AG04450 (cell line): ENCODE measurements at regions of chr18 and their contacts with region 1.

Region 1: DNA sequence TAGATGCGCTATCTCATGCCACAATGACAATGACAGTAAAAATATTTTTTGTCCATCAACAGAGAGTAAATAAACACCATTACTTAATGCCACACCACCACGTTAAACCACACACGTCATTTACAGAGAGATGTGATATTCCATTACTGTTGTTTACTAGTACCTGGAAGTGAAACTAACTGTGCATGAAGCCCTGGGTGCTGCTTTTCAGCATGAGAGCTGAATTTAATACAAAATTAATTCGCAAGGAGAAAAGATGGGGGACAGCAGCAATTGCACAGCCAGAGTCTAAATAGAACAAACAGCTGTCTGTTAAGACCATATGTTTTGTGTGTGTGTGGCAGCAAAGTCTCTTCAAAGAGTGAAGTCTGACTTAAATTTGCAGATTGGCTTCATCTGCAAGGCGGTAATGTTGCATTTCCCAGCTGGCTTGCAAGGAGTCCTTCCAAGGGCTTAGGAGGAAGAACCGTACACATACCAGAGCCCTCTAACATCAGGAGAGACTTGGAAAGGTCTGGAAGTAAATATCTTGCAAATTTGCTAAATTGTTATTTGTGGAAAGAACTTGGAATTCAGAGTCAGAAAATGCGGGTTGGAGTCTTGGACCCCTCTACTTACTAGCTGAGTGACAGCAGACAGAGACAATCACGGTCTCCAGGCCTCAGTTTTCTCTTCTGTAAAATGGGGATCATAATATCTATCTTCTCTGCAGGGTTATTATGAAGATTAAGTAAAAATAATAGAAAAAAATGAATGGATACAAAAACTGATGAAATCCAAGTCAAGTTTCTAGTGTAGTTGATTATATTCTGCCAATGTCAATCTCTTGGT is 127.6 kb downstream of the ALPK2 start:
- DNase-seq: no peak
- H3K4me3 ChIP-seq: no peak overlapping the region
- H3K27ac ChIP-seq: no peak overlapping the region
- H3K27me3 ChIP-seq: no peaks in the 10 kb centered on the region
- CTCF ChIP-seq: no peak

Region 2: DNA sequence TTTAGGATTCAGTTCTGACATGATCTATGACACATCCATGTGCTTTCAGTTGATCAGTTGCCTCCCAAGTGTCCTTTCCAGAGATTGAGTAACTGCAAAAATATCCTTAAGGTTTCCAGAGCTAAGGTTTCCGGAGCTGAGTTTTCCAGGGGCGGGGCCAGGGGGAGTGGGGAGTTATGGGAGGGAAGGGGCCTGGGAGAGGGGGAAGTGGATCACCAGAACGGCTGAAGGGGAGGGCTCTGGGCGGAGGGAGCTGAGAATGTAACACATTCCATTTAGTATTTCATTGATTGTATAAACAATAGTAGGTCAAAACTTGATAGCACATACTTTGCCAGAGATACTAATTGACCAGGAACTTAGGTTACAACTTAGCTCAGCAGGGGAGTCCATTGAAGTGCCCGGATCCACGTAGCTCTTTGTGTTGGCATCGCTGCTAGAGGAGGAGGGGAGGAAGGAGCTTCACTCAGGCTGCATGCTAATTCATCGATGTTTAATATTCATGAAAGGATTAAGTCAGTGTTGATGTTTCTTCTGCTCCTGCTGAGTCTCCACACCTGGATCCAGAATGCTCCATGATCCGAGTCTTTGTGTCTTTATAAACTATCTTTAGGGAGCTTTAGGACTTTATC is 162.2 kb before region 1 on chr18:
- CTCF ChIA-PET with region 1: no interaction called
- POLR2A ChIA-PET with region 1: interaction called, 10 read pairs
- DNase-seq: no peak
- H3K4me3 ChIP-seq: no peak overlapping the region
- H3K27ac ChIP-seq: no peak overlapping the region
- H3K27me3 ChIP-seq: no peaks in the 10 kb centered on the region
- CTCF ChIP-seq: no peak

Region 3: DNA sequence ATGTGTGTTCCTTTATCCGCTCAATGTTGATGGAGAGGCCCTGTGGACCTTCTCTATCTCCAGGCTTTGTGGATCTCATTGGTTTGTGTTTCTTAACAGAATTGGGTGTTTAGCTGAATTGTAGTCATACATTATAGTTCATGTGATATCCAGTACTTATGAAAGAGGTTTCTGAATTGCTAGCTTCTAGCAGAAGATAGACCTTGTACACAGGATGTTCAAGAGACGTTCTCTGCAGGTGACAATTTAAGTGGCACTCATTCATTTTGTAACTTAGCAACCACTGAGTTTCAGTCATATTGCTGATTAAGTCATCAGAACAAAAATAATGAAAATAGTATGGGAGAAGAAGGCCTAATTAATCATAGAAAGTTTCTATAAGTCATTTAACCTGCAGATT is 151.6 kb before region 1 on chr18:
- CTCF ChIA-PET with region 1: no interaction called
- POLR2A ChIA-PET with region 1: no interaction called
- DNase-seq: no peak
- H3K4me3 ChIP-seq: no peak overlapping the region
- H3K27ac ChIP-seq: no peak overlapping the region
- H3K27me3 ChIP-seq: no peaks in the 10 kb centered on the region
- CTCF ChIP-seq: no peak

Region 4: GRCh38 chr18:58520969-58521368 is 19.7 kb after region 1 on chr18:
- CTCF ChIA-PET with region 1: no interaction called
- POLR2A ChIA-PET with region 1: no interaction called
- DNase-seq: no peak
- H3K4me3 ChIP-seq: no peak overlapping the region
- H3K27ac ChIP-seq: no peak overlapping the region
- H3K27me3 ChIP-seq: no peaks in the 10 kb centered on the region
- CTCF ChIP-seq: no peak

Region 5: DNA sequence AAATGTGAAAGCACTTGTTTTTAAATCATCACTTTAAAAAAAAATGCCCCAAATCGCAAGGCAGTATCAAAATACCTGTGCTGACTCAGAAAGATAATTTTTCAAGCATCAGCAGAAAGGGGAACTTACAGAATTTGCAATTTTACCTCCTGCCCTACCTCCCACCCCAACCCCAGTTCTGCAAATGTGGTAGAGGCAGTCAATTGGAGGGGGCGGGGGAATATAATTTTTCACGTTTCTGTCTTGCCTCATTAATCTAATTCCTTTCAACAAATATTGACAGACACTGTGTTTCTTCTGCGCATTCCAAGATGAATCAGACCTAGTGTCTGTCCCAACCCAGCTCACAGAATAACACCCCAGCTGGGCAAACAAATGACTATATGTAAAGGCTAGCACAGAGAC is 50.8 kb after region 1 on chr18:
- CTCF ChIA-PET with region 1: no interaction called
- POLR2A ChIA-PET with region 1: no interaction called
- DNase-seq: no peak
- H3K4me3 ChIP-seq: no peak overlapping the region
- H3K27ac ChIP-seq: no peak overlapping the region
- H3K27me3 ChIP-seq: no peaks in the 10 kb centered on the region
- CTCF ChIP-seq: no peak

Region 6: DNA sequence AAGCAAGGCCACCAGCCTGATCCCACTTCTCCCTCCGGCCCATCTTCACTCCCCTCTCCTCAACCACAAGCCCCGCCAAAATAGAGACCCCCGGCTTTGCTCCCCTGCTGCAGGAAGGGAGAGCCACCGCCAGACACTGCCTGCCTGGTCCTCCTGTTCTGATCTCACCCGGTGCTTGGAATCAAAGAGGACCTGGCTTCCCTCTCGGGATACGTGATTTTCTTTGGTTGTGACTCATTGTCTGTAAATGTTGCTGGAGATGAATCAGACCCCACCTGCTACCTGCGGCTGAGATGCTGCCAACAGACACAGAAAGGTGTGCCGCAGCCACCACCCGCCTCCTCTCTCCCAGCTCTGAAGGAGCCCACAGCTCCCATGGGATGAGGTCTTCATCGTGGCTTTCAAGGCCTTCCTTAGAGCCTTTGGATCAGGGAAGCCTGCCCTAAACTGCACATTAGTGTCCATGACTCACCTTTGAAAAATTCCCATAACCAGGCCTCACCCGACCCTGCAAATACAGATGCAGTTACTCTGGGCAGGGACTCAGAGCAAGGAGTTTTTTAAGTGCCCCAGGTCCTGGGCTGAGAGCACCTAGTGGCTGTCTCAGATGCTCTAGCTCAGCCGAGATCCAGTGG is 284.0 kb after region 1 on chr18:
- CTCF ChIA-PET with region 1: no interaction called
- POLR2A ChIA-PET with region 1: no interaction called
- DNase-seq: peak; percentile 62
- H3K4me3 ChIP-seq: no peak overlapping the region
- H3K27ac ChIP-seq: peak overlapping the region; percentile 80
- H3K27me3 ChIP-seq: no peaks in the 10 kb centered on the region
- CTCF ChIP-seq: no peak; the same call in 1 of the 2 replicates